ENCODE measurements at regions of chr20 and their contacts with region 1.

Region 1: GRCh38 chr20:50790651-50791277 is 4.1 kb upstream of the BCAS4 start:
- DNase-seq: peak; percentile 94
- H3K4me3 ChIP-seq: no peak overlapping the region
- H3K27ac ChIP-seq: peak overlapping the region; percentile 88
- H3K4me1 ChIP-seq: peaks cover 47% of the 10 kb centered on the region
- H3K27me3 ChIP-seq: no peaks in the 10 kb centered on the region
- CTCF ChIP-seq: peak; percentile 89

Region 2: GRCh38 chr20:50645253-50646118 is 145.3 kb before region 1 on chr20:
- CTCF ChIA-PET with region 1: no interaction called
- POLR2A ChIA-PET with region 1: no interaction called
- intact Hi-C with region 1: loop called (anchors 2 kb)
- DNase-seq: peak; percentile 54
- H3K4me3 ChIP-seq: no peak overlapping the region
- H3K27ac ChIP-seq: peak overlapping the region; percentile 7
- H3K4me1 ChIP-seq: peaks cover 29% of the 10 kb centered on the region
- H3K27me3 ChIP-seq: no peaks in the 10 kb centered on the region
- CTCF ChIP-seq: no peak

Region 3: DNA sequence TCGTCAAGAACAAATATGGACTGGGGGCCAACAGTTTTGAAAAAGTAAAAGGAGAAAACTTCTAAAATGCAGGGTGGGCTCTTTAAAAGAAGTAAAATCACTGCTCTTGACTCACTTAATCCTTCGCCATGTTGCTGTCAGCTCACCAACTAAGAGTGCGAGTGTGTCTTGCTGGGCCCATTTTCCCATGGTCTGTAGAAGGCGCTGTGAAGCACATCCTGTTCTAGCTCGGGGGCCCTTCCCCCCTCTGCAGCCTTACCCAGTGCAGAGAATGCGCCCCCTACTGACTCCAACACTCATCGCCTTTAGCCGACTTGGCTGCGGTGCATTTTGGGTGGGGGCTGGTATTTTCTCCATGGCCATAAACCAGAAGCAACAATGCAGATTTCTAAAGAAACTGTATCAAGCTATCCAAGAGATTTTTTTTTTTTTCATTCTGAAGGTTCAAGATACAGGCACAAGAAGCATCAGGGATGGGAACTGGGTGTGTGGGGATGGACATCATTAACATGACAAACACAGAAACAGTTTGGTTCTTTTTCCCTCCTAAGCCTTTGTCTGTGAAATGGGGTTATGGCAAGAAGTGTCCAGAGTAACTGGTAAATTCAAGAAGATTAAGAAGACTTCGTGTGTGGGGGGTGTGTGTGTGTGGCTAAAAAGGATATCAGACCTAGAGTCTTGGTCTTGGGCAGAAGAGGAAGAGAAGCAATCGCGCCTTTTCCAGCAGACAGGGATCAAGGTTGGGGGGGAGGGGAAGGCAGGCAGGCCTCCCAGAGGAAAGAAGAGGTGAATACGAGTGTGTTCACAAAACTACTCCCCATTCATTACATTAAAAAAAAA is 138.8 kb after region 1 on chr20:
- CTCF ChIA-PET with region 1: interaction called, 22 read pairs
- POLR2A ChIA-PET with region 1: no interaction called
- intact Hi-C with region 1: loop called (anchors 5 kb)
- DNase-seq: peak; percentile 99
- H3K4me3 ChIP-seq: peak overlapping the region; percentile 64
- H3K27ac ChIP-seq: peak overlapping the region; percentile 82
- H3K4me1 ChIP-seq: peaks cover 43% of the 10 kb centered on the region
- H3K27me3 ChIP-seq: no peaks in the 10 kb centered on the region
- CTCF ChIP-seq: peak; percentile 100